Activated naive CD4-positive, alpha-beta T cell treated with anti-CD3 and anti-CD28 coated beads for 36 hours (primary cell): ENCODE measurements at regions of chr17 and their contacts with region 1.

Region 1: GRCh38 chr17:7989781-7990655 is 12.4 kb upstream of the GUCY2D start:
- DNase-seq: peak; percentile 95
- H3K4me3 Mint-ChIP-seq: peak overlapping the region; percentile 73
- H3K27ac Mint-ChIP-seq: peak overlapping the region; percentile 76
- H3K4me1 Mint-ChIP-seq: peaks cover 17% of the 10 kb centered on the region
- H3K27me3 Mint-ChIP-seq: no peaks in the 10 kb centered on the region

Region 2: DNA sequence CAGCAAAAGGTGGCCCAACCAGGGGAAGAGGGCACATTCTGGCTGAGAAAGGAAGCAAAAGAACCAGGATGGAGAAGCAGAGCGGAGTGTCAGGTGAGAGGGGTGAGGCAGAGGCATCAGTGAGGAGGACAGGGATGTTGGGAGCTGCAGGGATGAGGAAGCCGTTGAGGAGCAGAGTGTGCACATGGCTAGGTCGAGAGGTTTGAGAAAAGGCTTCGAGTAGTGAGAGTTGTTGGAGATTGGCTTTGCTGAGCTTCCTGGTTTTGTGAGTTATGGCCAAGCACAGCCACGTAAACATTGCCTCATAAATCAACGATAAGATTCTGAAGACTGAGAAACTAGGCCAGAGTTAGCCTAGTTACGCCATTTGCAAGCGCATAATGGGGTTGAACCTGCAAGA is 245.6 kb before region 1 on chr17:
- CTCF ChIA-PET with region 1: interaction called, 4 read pairs
- intact Hi-C with region 1: loop called (anchors 1 kb)
- DNase-seq: no peak
- H3K4me3 Mint-ChIP-seq: no peak overlapping the region
- H3K27ac Mint-ChIP-seq: no peak overlapping the region
- H3K4me1 Mint-ChIP-seq: no peaks in the 10 kb centered on the region
- H3K27me3 Mint-ChIP-seq: peaks cover 8% of the 10 kb centered on the region

Region 3: DNA sequence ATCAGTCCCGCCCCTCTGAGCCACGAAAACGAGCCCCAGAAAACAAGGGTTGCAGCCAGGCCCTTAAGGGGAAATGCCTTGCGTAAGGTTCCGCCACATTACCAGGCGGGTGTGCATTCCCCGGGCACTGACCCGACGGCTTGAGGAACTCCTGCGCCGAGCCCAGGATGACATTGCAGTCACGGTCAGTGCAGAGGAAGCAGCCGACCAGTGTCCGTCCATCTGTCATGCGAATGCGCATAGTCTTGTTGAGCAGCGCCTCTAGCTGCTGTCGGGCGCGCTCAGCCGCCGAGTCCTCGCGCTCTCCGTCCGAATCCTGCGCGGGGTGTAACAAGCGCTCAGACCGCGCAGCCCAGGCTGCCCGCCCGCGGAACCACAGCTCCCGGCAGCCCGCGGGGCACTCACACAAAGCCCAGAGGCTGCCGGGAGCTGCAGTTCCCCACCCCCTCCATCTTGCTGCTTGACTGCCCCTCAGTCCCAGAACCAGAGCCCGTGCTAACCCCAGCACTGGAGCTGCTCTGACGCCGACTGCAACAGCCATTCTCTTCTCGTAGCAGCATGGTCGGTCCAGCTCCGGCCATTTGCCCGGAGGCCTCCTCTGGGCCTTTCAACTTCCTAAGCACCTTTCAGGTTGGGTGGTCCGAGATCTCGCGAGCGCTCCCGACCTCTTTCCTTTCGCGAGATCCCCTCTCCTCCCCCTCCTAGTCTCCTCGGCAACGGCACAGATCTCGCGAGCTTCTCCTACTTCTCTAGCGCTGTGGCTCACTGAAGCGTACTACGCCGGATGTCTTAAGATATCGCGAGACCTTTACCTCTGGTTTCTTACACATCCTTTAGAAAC is 132.9 kb before region 1 on chr17 and contains the start of gene NAA38:
- CTCF ChIA-PET with region 1: interaction called, 99 read pairs
- intact Hi-C with region 1: loop called (anchors 1 kb)
- DNase-seq: peak; percentile 98
- H3K4me3 Mint-ChIP-seq: no peak within 1 kb of the TSS
- H3K27ac Mint-ChIP-seq: no peak within 1 kb of the TSS
- H3K4me1 Mint-ChIP-seq: peaks cover 22% of the 10 kb centered on the region
- H3K27me3 Mint-ChIP-seq: no peaks in the 10 kb centered on the region
- total RNA-seq, gene NAA38: 75.0 to 75.3 TPM

Region 4: DNA sequence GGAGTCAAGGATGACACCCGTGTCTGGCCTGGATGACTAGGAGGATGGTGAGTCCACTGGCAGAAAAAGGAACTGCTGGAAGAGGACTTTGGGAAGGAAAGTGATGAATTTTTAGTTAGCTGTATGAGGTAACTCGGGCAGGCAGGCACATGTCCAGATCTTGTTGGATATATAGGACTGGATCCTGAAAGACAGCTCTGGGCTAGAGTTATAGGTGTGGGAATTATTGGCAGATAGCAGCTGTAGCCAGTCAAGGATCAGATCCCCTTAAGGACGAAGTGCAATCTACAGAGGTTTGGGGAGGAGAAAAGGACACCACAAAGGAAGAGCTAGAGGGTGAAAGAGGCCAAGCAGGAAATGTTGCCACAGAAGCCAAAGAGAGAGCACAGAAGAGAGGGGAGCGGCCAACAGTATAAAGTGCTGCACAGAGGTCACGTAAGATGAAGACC is 122.1 kb before region 1 on chr17:
- CTCF ChIA-PET with region 1: interaction called, 99 read pairs
- intact Hi-C with region 1: loop called (anchors 1 kb)
- DNase-seq: no peak
- H3K4me3 Mint-ChIP-seq: peak overlapping the region; percentile 0
- H3K27ac Mint-ChIP-seq: peak overlapping the region; percentile 51
- H3K4me1 Mint-ChIP-seq: peaks cover 21% of the 10 kb centered on the region
- H3K27me3 Mint-ChIP-seq: no peaks in the 10 kb centered on the region

Region 5: GRCh38 chr17:7922845-7923628 is 67.0 kb before region 1 on chr17:
- CTCF ChIA-PET with region 1: interaction called, 44 read pairs
- intact Hi-C with region 1: no loop called
- DNase-seq: peak; percentile 90
- H3K4me3 Mint-ChIP-seq: peak overlapping the region; percentile 73
- H3K27ac Mint-ChIP-seq: peak overlapping the region; percentile 80
- H3K4me1 Mint-ChIP-seq: peaks cover 14% of the 10 kb centered on the region
- H3K27me3 Mint-ChIP-seq: no peaks in the 10 kb centered on the region

Region 6: DNA sequence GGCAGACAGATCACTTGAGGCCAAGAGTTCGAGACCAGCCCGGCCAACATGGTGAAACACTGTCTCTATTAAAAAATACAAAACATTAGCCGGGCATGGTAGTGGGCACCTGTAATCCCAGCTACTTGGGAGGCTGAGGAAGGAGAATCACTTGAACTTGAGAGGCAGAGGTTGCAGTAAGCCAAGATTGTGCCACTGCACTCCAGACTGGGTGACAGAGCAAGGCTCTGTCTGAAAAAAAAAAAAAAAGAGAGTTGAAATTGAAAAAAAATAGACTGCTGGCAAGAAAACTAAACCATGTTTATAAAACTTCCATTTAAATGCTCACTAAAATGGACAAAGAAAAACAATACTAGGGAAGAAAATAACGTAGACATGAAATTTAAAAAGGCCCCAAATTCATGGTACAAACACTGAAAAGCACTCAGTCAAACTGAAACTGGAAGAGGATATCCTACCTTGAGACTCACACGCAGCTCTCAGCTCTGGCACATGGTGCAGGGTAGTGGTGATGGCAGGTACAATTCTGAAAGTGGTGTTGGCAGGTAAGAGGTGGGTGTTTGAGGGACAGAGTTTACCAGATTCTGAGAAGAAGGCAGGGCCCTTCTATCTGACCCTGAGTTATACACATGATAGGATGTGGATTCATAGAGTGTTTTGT is 38.7 kb before region 1 on chr17:
- CTCF ChIA-PET with region 1: interaction called, 8 read pairs
- intact Hi-C with region 1: loop called (anchors 5 kb)
- DNase-seq: peak; percentile 68
- H3K4me3 Mint-ChIP-seq: no peak overlapping the region
- H3K27ac Mint-ChIP-seq: peak overlapping the region; percentile 20
- H3K4me1 Mint-ChIP-seq: peaks cover 16% of the 10 kb centered on the region
- H3K27me3 Mint-ChIP-seq: no peaks in the 10 kb centered on the region

Region 7: GRCh38 chr17:8057691-8058114 is 67.7 kb after region 1 on chr17:
- CTCF ChIA-PET with region 1: interaction called, 13 read pairs
- intact Hi-C with region 1: loop called (anchors 2 kb)
- DNase-seq: peak; percentile 60
- H3K4me3 Mint-ChIP-seq: no peak overlapping the region
- H3K27ac Mint-ChIP-seq: no peak overlapping the region
- H3K4me1 Mint-ChIP-seq: peaks cover 3% of the 10 kb centered on the region
- H3K27me3 Mint-ChIP-seq: peaks cover 49% of the 10 kb centered on the region